Heart right ventricle (tissue), 16 donors: ENCODE measurements at regions of chr1 and their contacts with region 1.

Region 1: DNA sequence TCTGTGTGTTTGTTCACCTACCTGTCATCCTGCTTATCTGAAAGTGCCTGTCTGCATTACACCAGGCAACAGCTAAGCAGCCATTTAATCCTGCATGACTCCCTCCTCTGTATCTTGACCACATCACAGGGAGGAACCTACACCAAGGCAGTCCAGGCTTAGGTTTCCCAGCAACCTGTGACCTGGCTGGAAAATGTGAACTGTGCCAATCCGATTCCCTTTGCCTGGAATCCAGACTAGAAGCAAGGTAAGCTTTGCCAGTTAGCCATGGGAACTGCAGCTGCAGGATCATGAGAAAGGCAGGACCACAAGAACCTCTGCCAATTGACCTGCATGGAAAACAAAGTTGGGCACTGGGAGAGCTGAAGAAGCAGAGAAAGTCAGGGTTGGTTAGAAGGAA is 6.3 kb upstream of the ATP1B1 start:
- DNase-seq: no peak
- ATAC-seq: no peak
- H3K4me3 ChIP-seq: no peak overlapping the region
- H3K27ac ChIP-seq: no peak overlapping the region
- H3K4me1 ChIP-seq: peaks cover 0 to 46% (median 12%) of the 10 kb centered on the region in 9 donors
- H3K27me3 ChIP-seq: peaks cover 0 to 6% (median 0%) of the 10 kb centered on the region in 7 donors
- CTCF ChIP-seq: no peak

Region 2: GRCh38 chr1:169044296-169044695 is 55.9 kb before region 1 on chr1:
- intact Hi-C with region 1: loop called in 1 of 10 experiments (anchors 2 kb)
- DNase-seq: no peak
- ATAC-seq: peak in 7 of 8 donors; percentile 50 to 70 (median 63)
- H3K4me3 ChIP-seq: no peak overlapping the region
- H3K27ac ChIP-seq: peak overlapping the region in 1 of 10 donors; percentile 57
- H3K4me1 ChIP-seq: peaks cover 0 to 35% (median 11%) of the 10 kb centered on the region in 9 donors
- H3K27me3 ChIP-seq: no peaks in the 10 kb centered on the region
- CTCF ChIP-seq: no peak

Region 3: GRCh38 chr1:169175461-169175860 is 75.3 kb after region 1 on chr1:
- intact Hi-C with region 1: no loop called
- DNase-seq: no peak
- ATAC-seq: no peak
- H3K4me3 ChIP-seq: no peak overlapping the region
- H3K27ac ChIP-seq: no peak overlapping the region
- H3K4me1 ChIP-seq: no peaks in the 10 kb centered on the region
- H3K27me3 ChIP-seq: no peaks in the 10 kb centered on the region
- CTCF ChIP-seq: no peak